ENCODE measurements at regions of chr11 and their contacts with region 1.

Region 1: GRCh38 chr11:131056036-131056435 is 139.8 kb upstream of the SNX19 start:
- DNase-seq: no peak
- ATAC-seq: no peak
- H3K4me3 Mint-ChIP-seq: no peak overlapping the region
- H3K27ac Mint-ChIP-seq: no peak overlapping the region
- H3K4me1 Mint-ChIP-seq: no peaks in the 10 kb centered on the region
- H3K27me3 Mint-ChIP-seq: no peaks in the 10 kb centered on the region
- CTCF ChIP-seq: no peak

Region 2: GRCh38 chr11:130999997-131000770 is 55.9 kb before region 1 on chr11:
- CTCF ChIA-PET with region 1: no interaction called
- POLR2A ChIA-PET with region 1: no interaction called
- intact Hi-C with region 1: loop called (anchors 10 kb)
- DNase-seq: no peak
- ATAC-seq: no peak
- H3K4me3 Mint-ChIP-seq: no peak overlapping the region
- H3K27ac Mint-ChIP-seq: no peak overlapping the region
- H3K4me1 Mint-ChIP-seq: no peaks in the 10 kb centered on the region
- H3K27me3 Mint-ChIP-seq: no peaks in the 10 kb centered on the region
- CTCF ChIP-seq: no peak